ENCODE measurements at regions of chr1 and their contacts with region 1.

Region 1: DNA sequence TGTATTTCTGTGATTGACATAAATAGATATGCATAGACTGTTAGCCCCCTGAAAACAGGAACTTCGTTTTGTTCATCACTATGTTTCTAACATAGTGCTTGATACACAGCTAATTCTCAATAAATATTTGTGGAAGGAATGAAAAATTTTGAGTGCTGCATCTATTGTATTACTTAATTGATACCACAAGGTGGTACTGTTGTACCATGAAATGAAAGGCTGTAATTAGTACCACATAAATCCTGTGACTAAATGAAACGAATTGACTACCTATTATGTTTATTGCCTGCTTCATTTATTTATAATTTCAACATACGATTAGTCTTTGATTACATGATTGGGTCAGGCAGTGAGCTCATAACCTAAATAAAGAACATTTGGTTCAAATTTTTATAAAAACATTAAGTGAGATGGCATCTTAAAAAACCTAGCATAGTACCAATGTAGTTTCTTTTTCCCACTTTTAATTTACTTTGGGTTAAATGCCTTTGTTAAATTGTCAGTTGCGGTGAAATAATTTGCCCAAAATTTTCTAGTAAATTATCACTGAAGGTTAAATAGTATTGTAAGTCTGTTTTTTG is 15.0 kb upstream of the TGFB2 start:
- DNase-seq: peak; percentile 31 to 44 (median 40)
- ATAC-seq: peak; percentile 81
- H3K4me3 ChIP-seq: no peak overlapping the region
- H3K27ac ChIP-seq: no peak overlapping the region
- H3K4me1 ChIP-seq: no peaks in the 10 kb centered on the region
- H3K27me3 ChIP-seq: no peaks in the 10 kb centered on the region
- CTCF ChIP-seq: peak; percentile 26 to 80 (median 46); a peak in 4 of 6 replicates
- EP300 ChIP-seq: no peak
- POLR2A ChIP-seq: no peak
- RAD21 ChIP-seq: peak; percentile 90 to 93

Region 2: DNA sequence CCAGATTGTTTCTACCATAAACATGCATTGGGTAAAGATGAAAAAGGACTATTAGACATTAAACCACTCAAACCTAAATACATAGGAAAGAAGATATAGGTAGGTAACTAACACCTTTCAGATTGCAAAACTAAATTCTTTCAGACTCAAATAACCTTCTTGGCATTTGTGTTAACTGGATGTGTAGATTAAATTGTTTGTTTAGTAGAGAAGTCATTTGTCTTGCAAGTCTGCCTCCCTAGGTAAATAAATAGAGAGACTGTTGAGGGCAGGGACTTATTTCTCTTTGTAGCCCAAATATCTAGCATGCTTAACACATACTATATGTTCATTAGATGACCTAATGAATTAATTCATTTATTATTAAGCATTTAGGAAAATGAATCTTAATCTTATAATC is 146.3 kb before region 1 on chr1:
- CTCF ChIA-PET with region 1: no interaction called
- POLR2A ChIA-PET with region 1: no interaction called
- in situ Hi-C with region 1: no loop called
- intact Hi-C with region 1: no loop called
- DNase-seq: no peak
- ATAC-seq: no peak
- H3K4me3 ChIP-seq: no peak overlapping the region
- H3K27ac ChIP-seq: no peak overlapping the region
- H3K4me1 ChIP-seq: no peaks in the 10 kb centered on the region
- H3K27me3 ChIP-seq: no peaks in the 10 kb centered on the region
- CTCF ChIP-seq: no peak
- EP300 ChIP-seq: no peak
- POLR2A ChIP-seq: no peak
- RAD21 ChIP-seq: no peak

Region 3: GRCh38 chr1:218299416-218299815 is 30.7 kb before region 1 on chr1:
- CTCF ChIA-PET with region 1: no interaction called
- POLR2A ChIA-PET with region 1: no interaction called
- in situ Hi-C with region 1: no loop called
- intact Hi-C with region 1: loop called (anchors 2 kb)
- DNase-seq: peak in 3 of 4 experiments; percentile 25 to 78 (median 54)
- ATAC-seq: peak; percentile 76
- H3K4me3 ChIP-seq: no peak overlapping the region
- H3K27ac ChIP-seq: no peak overlapping the region
- H3K4me1 ChIP-seq: peaks cover 15 to 42% of the 10 kb centered on the region in 2 experiments
- H3K27me3 ChIP-seq: no peaks in the 10 kb centered on the region
- CTCF ChIP-seq: peak; percentile 54 to 80 (median 70)
- EP300 ChIP-seq: 0 out of 2 replicates have a peak, but pooled peaks have one; percentile 6
- POLR2A ChIP-seq: no peak
- RAD21 ChIP-seq: peak; percentile 69 to 82

Region 4: GRCh38 chr1:218557731-218558130 is 227.6 kb after region 1 on chr1:
- CTCF ChIA-PET with region 1: no interaction called
- POLR2A ChIA-PET with region 1: no interaction called
- in situ Hi-C with region 1: no loop called
- intact Hi-C with region 1: loop called (anchors 2 kb)
- DNase-seq: peak in 1 of 4 experiments; percentile 6
- ATAC-seq: no peak
- H3K4me3 ChIP-seq: no peak overlapping the region
- H3K27ac ChIP-seq: no peak overlapping the region
- H3K4me1 ChIP-seq: no peaks in the 10 kb centered on the region; a peak in 1 of 5 replicates
- H3K27me3 ChIP-seq: no peaks in the 10 kb centered on the region
- CTCF ChIP-seq: no peak
- EP300 ChIP-seq: no peak
- POLR2A ChIP-seq: no peak
- RAD21 ChIP-seq: no peak

Region 5: DNA sequence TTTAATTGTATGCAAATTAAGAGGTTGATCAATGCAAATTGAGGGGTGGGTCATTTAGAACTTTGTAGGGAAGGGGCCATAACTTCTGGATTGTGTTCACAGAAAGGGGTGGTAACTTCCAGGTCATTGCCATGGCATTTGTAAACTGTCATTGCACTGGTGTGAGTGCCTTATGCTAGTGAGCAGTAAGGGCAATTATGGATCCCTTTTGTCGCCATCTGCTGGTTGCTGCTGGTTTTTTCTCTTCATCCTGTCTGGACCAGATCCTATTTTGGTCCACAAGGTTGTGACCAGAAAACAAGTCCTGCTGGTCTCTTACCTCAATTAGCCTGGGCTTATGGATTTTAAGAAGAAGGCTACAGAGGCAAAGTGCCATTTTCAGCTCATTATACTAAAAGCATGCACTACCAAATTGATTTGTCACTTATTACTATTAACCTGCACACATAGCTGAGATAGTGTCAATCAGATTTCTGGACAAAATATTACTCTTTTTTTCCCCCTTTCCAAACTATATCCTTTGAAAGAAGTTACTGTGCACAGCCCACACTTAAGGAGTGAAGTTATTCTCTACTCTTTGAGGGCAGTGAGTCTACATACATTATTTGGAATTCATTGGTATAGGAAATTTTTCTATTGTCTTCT is 1086.6 kb after region 1 on chr1:
- CTCF ChIA-PET with region 1: interaction called, 7 read pairs
- POLR2A ChIA-PET with region 1: no interaction called
- in situ Hi-C with region 1: no loop called
- intact Hi-C with region 1: loop called (anchors 10 kb)
- DNase-seq: peak; percentile 26 to 72 (median 36)
- ATAC-seq: peak; percentile 97
- H3K4me3 ChIP-seq: no peak overlapping the region
- H3K27ac ChIP-seq: no peak overlapping the region
- H3K4me1 ChIP-seq: no peaks in the 10 kb centered on the region
- H3K27me3 ChIP-seq: no peaks in the 10 kb centered on the region
- CTCF ChIP-seq: peak; percentile 72 to 80 (median 76)
- EP300 ChIP-seq: no peak
- POLR2A ChIP-seq: no peak
- RAD21 ChIP-seq: peak; percentile 58 to 78

Region 6: DNA sequence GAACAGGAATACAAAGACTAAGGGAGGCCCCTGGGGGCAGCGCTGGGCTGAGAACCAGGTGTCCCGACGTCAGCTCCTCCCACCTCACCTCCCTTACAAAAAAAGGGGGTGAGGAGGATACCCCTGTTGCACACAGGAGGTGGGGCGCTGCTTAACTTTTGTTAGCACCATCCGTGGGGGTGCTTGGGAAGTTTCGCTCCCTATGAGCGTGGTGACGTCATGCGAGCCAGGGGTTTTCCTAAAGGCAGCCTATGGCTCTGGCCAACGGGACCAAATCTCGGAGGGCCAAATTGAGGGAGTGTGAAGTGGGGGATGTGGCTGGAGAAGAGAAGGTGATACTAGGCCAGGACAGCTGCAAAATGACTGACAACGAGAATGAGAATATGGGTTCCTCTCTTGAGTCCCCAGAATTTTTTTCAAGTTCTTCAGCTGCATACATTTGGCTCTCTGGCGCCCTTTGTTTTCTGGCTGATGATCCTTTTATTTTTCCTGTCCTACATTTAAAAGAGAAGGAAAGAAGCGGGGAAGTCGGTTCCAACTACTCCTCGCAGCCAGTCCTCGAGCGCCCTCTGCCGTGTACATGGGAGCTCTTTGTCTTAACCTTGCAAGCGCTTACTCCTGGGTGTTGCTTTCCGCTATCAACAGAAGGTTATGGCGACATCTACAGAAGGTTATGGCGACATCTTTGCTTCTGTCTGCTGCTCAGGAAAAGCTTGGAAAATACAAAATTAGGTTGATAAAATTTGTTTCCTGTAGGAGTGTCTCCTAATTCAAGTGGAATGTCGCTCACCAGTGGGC is 1330.7 kb after region 1 on chr1:
- CTCF ChIA-PET with region 1: interaction called, 3 read pairs
- POLR2A ChIA-PET with region 1: interaction called, 5 read pairs
- in situ Hi-C with region 1: no loop called
- intact Hi-C with region 1: loop called (anchors 1 kb)
- DNase-seq: peak; percentile 76 to 91 (median 78)
- ATAC-seq: peak; percentile 98
- H3K4me3 ChIP-seq: no peak overlapping the region
- H3K27ac ChIP-seq: no peak overlapping the region
- H3K4me1 ChIP-seq: peaks cover 0 to 7% of the 10 kb centered on the region in 2 experiments; a peak in 4 of 5 replicates
- H3K27me3 ChIP-seq: no peaks in the 10 kb centered on the region
- CTCF ChIP-seq: peak; percentile 95 to 96 (median 95)
- EP300 ChIP-seq: no peak
- POLR2A ChIP-seq: no peak
- RAD21 ChIP-seq: peak; percentile 88 to 94